ENCODE measurements at regions of chr7 and their contacts with region 1.

Region 1: GRCh38 chr7:95886501-95887090 is 114.2 kb downstream of the DYNC1I1 start:
- DNase-seq: peak; percentile 96
- H3K4me3 ChIP-seq: peak overlapping the region in 1 of 3 experiments; percentile 7
- H3K27ac ChIP-seq: peak overlapping the region; percentile 73
- H3K4me1 ChIP-seq: peaks cover 17% of the 10 kb centered on the region
- H3K27me3 ChIP-seq: no peaks in the 10 kb centered on the region
- CTCF ChIP-seq: no peak
- POLR2A ChIP-seq: no peak

Region 2: DNA sequence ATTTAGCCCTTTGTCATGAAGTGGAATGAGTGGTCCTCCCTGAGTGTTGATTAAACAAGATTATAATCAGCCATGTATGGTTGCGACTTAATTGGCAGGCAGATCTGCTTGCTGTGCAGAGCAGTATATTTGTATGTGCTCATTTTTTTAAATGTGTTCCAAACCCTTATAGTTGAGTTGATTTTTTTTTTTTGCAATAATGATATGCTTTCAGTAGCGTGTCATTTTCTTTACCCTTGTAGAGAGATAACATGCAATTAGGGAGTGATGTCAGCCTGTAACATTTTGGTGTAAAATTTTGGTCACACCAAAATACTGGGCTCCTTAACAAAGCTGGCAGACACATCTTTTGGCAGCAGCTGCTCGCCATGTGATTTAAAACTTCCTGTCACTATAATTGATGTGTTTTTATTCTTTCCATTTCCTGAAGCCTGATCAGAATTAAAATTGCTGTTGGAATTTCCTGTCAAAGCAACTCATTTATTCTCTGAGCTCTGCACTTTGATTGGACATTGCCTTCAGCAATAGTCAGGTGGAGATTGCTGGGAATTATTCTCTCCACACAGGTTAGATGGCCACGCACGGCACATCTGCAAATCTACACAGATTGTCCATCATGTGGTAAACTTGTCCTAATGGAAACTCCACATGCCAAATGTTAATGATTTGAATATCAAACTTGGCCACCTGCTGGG is 11.1 kb after region 1 on chr7:
- CTCF ChIA-PET with region 1: interaction called, 5 read pairs
- POLR2A ChIA-PET with region 1: no interaction called
- dilution Hi-C with region 1: no loop called
- intact Hi-C with region 1: loop called (anchors 1 kb)
- DNase-seq: peak; percentile 87
- H3K4me3 ChIP-seq: no peak overlapping the region
- H3K27ac ChIP-seq: no peak overlapping the region
- H3K4me1 ChIP-seq: peaks cover 17% of the 10 kb centered on the region
- H3K27me3 ChIP-seq: peaks cover 2 to 7% of the 10 kb centered on the region in 2 experiments
- CTCF ChIP-seq: no peak
- POLR2A ChIP-seq: no peak

Region 3: DNA sequence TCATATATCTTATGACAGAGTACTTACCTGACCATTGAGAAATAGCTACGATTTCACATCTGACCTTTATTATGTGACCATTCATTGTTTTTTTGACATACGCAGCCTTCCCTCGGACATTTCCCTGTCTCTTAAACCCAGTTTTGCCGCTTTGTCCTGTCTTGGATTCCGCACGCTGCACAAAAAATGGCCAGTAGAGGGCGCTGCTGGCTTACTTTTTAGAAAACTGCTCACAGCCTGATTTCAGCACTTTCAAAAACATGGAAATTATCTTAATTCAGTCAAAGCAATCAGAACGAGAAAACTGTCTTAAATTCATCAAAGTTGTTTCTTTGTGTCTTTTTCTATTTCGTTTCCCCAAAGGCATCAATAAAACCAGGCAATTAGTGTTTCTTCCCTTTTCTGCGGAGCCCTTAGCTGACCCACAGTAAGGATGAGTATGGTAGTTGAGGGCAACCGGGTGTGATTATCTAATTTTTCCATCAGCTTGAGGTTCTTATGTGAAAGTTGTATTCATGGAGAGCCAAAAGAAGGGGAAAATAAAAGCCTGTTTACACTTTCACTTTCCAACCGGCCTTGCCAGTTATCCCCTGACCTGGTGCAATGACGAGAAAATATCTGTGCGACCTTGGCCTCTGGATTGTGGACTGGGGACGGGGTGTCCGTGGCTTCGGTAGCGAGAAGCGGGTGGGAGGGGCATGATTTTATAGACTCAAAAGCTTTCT is 30.1 kb after region 1 on chr7:
- CTCF ChIA-PET with region 1: no interaction called
- POLR2A ChIA-PET with region 1: no interaction called
- dilution Hi-C with region 1: no loop called
- intact Hi-C with region 1: no loop called
- DNase-seq: peak; percentile 77
- H3K4me3 ChIP-seq: no peak overlapping the region
- H3K27ac ChIP-seq: no peak overlapping the region
- H3K4me1 ChIP-seq: no peaks in the 10 kb centered on the region
- H3K27me3 ChIP-seq: peaks cover 20 to 21% of the 10 kb centered on the region in 2 experiments
- CTCF ChIP-seq: peak; percentile 72 to 94
- POLR2A ChIP-seq: no peak

Region 4: GRCh38 chr7:96067321-96067720 is 180.7 kb after region 1 on chr7:
- CTCF ChIA-PET with region 1: no interaction called
- POLR2A ChIA-PET with region 1: no interaction called
- dilution Hi-C with region 1: no loop called
- intact Hi-C with region 1: no loop called
- DNase-seq: no peak
- H3K4me3 ChIP-seq: no peak overlapping the region
- H3K27ac ChIP-seq: no peak overlapping the region
- H3K4me1 ChIP-seq: no peaks in the 10 kb centered on the region
- H3K27me3 ChIP-seq: peaks cover 2 to 8% of the 10 kb centered on the region in 2 experiments
- CTCF ChIP-seq: no peak
- POLR2A ChIP-seq: no peak

Measured in endothelial cell of umbilical vein (primary cell).